A549 (cell line): ENCODE measurements at regions of chr1 and their contacts with region 1.

Region 1: DNA sequence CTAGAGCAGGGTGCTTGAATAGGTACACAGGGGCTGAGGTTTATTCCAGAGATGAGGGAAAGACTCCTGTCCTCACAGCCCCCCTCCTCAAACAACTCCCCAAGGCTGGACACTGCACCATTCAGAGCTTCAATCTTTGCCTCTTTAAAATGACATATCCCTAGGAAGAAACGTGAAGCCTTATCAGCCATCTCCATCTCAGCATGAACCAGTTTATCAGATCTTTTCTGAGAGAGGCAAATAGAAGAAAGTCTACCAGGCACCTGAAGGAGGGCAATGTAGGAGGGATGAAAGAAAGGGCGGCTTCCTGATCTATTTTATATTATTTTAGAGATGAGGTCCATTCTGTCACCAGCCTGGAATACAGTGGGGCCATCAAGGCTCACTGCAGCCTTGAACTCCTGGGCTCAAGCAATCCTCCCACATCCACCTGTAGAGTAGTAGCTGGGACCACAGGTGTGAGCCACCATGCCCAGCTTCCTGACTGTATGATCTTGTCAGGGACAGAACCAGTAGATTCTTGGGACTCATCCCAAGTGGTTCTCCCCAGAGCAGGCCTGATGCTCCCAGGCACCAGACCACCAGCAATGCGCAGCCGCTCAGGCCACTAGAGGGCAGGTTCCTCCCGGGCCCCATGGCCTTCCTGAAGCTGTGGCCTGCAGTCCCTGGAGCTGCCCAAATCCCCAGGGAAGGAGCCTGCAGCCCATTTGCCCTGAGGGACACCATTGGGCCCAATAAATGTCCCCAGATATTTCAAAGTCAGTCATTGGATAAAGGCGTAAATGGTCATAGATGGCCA is 44.4 kb upstream of the GOLT1A start:
- DNase-seq: peak; percentile 74 to 85
- ATAC-seq: peak; percentile 86 to 93
- H3K4me3 ChIP-seq: no peak overlapping the region
- H3K27ac ChIP-seq: peak overlapping the region; percentile 7 to 31; a peak in 1 of 6 replicates
- H3K4me1 ChIP-seq: peaks cover 35% of the 10 kb centered on the region
- CTCF ChIP-seq: peak; percentile 83
- EP300 ChIP-seq: no peak
- POLR2A ChIP-seq: no peak
- RAD21 ChIP-seq: peak; percentile 90 to 92

Region 2: GRCh38 chr1:204213668-204214662 is 44.2 kb before region 1 on chr1 and contains the start of gene GOLT1A:
- CTCF ChIA-PET with region 1: interaction called, 17 read pairs
- POLR2A ChIA-PET with region 1: no interaction called
- DNase-seq: peak; percentile 78 to 91
- ATAC-seq: peak; percentile 88 to 92
- H3K4me3 ChIP-seq: peak within 1 kb of the TSS; percentile 54
- H3K27ac ChIP-seq: peak within 1 kb of the TSS; percentile 73 to 88
- H3K4me1 ChIP-seq: peaks cover 6% of the 10 kb centered on the region; the same call in 2 of the 3 replicates
- CTCF ChIP-seq: peak; percentile 84
- EP300 ChIP-seq: no peak
- POLR2A ChIP-seq: no peak
- RAD21 ChIP-seq: peak; percentile 85 to 86
- polyA plus RNA-seq, gene GOLT1A: 6.4 and 6.8 TPM in 2 replicates

Region 3: GRCh38 chr1:204275695-204276370 is 17.7 kb after region 1 on chr1:
- CTCF ChIA-PET with region 1: interaction called, 71 read pairs
- POLR2A ChIA-PET with region 1: no interaction called
- DNase-seq: no peak
- ATAC-seq: no peak
- H3K4me3 ChIP-seq: no peak overlapping the region
- H3K27ac ChIP-seq: no peak overlapping the region
- H3K4me1 ChIP-seq: peaks cover 14% of the 10 kb centered on the region
- CTCF ChIP-seq: no peak
- EP300 ChIP-seq: no peak
- POLR2A ChIP-seq: no peak
- RAD21 ChIP-seq: no peak

Region 4: GRCh38 chr1:204307334-204307883 is 49.3 kb after region 1 on chr1:
- CTCF ChIA-PET with region 1: interaction called, 13 read pairs
- POLR2A ChIA-PET with region 1: no interaction called
- DNase-seq: no peak
- ATAC-seq: peak in 1 of 2 experiments; percentile 37; a peak in 3 of 6 replicates
- H3K4me3 ChIP-seq: no peak overlapping the region
- H3K27ac ChIP-seq: peak overlapping the region in 1 of 2 experiments; percentile 21; a peak in 1 of 6 replicates
- H3K4me1 ChIP-seq: peaks cover 8% of the 10 kb centered on the region; the same call in 2 of the 3 replicates
- CTCF ChIP-seq: no peak
- EP300 ChIP-seq: no peak
- POLR2A ChIP-seq: no peak
- RAD21 ChIP-seq: no peak

Region 5: GRCh38 chr1:204341380-204341779 is 83.2 kb after region 1 on chr1:
- CTCF ChIA-PET with region 1: interaction called, 38 read pairs
- POLR2A ChIA-PET with region 1: no interaction called
- DNase-seq: no peak
- ATAC-seq: no peak
- H3K4me3 ChIP-seq: no peak overlapping the region
- H3K27ac ChIP-seq: no peak overlapping the region
- H3K4me1 ChIP-seq: peaks cover 31% of the 10 kb centered on the region
- CTCF ChIP-seq: no peak
- EP300 ChIP-seq: no peak
- POLR2A ChIP-seq: no peak
- RAD21 ChIP-seq: no peak

Region 6: DNA sequence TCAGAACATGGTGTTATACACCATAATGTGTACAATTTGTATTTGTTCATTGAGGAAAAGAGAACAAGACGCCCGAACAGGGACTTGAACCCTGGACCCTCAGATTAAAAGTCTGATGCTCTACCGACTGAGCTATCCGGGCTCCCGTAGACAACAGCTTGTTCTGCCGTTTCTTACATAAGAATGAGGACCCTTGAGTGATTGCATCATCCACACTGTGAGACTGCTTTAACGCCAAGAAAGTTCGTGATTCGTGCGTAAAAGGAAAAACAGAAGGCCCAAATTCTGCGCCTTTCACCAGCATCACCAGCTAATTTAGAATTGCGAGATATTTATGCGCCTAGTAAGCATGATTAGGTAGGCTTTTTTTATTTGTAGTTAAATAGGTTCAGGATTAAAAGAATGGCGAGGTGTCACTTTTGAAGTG is 248.8 kb after region 1 on chr1:
- CTCF ChIA-PET with region 1: interaction called, 14 read pairs
- POLR2A ChIA-PET with region 1: no interaction called
- DNase-seq: peak; percentile 35 to 93
- ATAC-seq: peak; percentile 79 to 87
- H3K4me3 ChIP-seq: peak overlapping the region; percentile 53
- H3K27ac ChIP-seq: peak overlapping the region; percentile 78 to 89
- H3K4me1 ChIP-seq: peaks cover 21% of the 10 kb centered on the region
- CTCF ChIP-seq: no peak
- EP300 ChIP-seq: no peak
- POLR2A ChIP-seq: no peak
- RAD21 ChIP-seq: no peak